Activated CD4-positive, alpha-beta T cell treated with anti-CD3 and anti-CD28 coated beads, Interleukin-2, amount 10 ng/mL, durations not matched to agents 24 days and 14 days (primary cell): ENCODE measurements at regions of chr4 and their contacts with region 1.

Region 1: DNA sequence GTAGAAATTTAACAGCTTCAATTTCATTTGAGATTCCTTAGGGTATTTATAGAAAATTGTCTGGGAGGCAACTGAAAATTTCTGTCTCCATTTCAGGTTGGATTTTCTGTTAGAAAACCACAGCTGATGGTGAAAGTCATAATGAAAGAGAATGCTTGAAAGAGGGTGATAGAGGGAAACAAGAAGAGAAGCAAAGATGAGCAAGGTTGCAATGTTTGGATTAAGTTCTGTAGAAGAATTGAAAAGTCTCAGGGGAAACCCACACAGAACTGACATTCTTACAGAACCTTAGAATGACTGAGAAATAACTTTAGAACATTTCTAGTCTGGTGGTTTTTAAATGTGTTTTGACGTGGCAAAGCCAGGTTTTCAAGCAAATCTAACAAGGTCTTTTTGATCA is 14.7 kb downstream of the GBA3 start:
- DNase-seq: no peak
- H3K4me3 Mint-ChIP-seq: no peak overlapping the region
- H3K27ac Mint-ChIP-seq: no peak overlapping the region
- H3K4me1 Mint-ChIP-seq: peaks cover 8% of the 10 kb centered on the region
- H3K27me3 Mint-ChIP-seq: peaks cover 3% of the 10 kb centered on the region

Region 2: GRCh38 chr4:22444813-22445212 is 262.6 kb before region 1 on chr4:
- intact Hi-C with region 1: loop called (anchors 1 kb)
- DNase-seq: no peak
- H3K4me3 Mint-ChIP-seq: peak overlapping the region; percentile 84
- H3K27ac Mint-ChIP-seq: peak overlapping the region; percentile 98
- H3K4me1 Mint-ChIP-seq: peaks cover 24% of the 10 kb centered on the region
- H3K27me3 Mint-ChIP-seq: no peaks in the 10 kb centered on the region